CD4-positive, alpha-beta T cell (primary cell): ENCODE measurements at regions of chr1 and their contacts with region 1.

Region 1: GRCh38 chr1:169711469-169712281 is at the start of gene SELL:
- DNase-seq: peak; percentile 53 to 90 (median 70)
- ATAC-seq: peak; percentile 67
- H3K4me3 ChIP-seq: peak within 1 kb of the TSS; percentile 58
- H3K4me3 Mint-ChIP-seq: peak within 1 kb of the TSS; percentile 93
- H3K27ac ChIP-seq: peak within 1 kb of the TSS; percentile 56 to 74
- H3K27ac Mint-ChIP-seq: no peak within 1 kb of the TSS
- H3K4me1 ChIP-seq: peaks cover 6% of the 10 kb centered on the region
- H3K4me1 Mint-ChIP-seq: peaks cover 22% of the 10 kb centered on the region
- H3K27me3 ChIP-seq: no peaks in the 10 kb centered on the region
- H3K27me3 Mint-ChIP-seq: no peaks in the 10 kb centered on the region
- CTCF ChIP-seq: peak; percentile 89
- total RNA-seq, gene SELL: 204 to 216 TPM

Region 2: GRCh38 chr1:169466259-169467230 is 245.1 kb before region 1 on chr1:
- CTCF ChIA-PET with region 1: interaction called, 3 read pairs
- POLR2A ChIA-PET with region 1: interaction called, 3 read pairs
- intact Hi-C with region 1: loop called in 1 of 2 experiments (anchors 10 kb)
- DNase-seq: peak in 5 of 14 experiments; percentile 10 to 53 (median 38)
- ATAC-seq: no peak
- H3K4me3 ChIP-seq: no peak overlapping the region
- H3K4me3 Mint-ChIP-seq: no peak overlapping the region
- H3K27ac ChIP-seq: no peak overlapping the region
- H3K27ac Mint-ChIP-seq: no peak overlapping the region
- H3K4me1 ChIP-seq: no peaks in the 10 kb centered on the region
- H3K4me1 Mint-ChIP-seq: peaks cover 4% of the 10 kb centered on the region
- H3K27me3 ChIP-seq: no peaks in the 10 kb centered on the region
- H3K27me3 Mint-ChIP-seq: no peaks in the 10 kb centered on the region
- CTCF ChIP-seq: peak; percentile 62

Region 3: GRCh38 chr1:169546087-169546995 is 165.3 kb before region 1 on chr1:
- CTCF ChIA-PET with region 1: interaction called, 48 read pairs
- POLR2A ChIA-PET with region 1: interaction called, 5 read pairs
- intact Hi-C with region 1: loop called (anchors 1 to 2 kb)
- DNase-seq: peak; percentile 22 to 86 (median 33)
- ATAC-seq: peak; percentile 89
- H3K4me3 ChIP-seq: no peak overlapping the region
- H3K4me3 Mint-ChIP-seq: no peak overlapping the region
- H3K27ac ChIP-seq: no peak overlapping the region
- H3K27ac Mint-ChIP-seq: no peak overlapping the region
- H3K4me1 ChIP-seq: no peaks in the 10 kb centered on the region
- H3K4me1 Mint-ChIP-seq: peaks cover 4% of the 10 kb centered on the region
- H3K27me3 ChIP-seq: no peaks in the 10 kb centered on the region
- H3K27me3 Mint-ChIP-seq: no peaks in the 10 kb centered on the region
- CTCF ChIP-seq: peak; percentile 82

Region 4: DNA sequence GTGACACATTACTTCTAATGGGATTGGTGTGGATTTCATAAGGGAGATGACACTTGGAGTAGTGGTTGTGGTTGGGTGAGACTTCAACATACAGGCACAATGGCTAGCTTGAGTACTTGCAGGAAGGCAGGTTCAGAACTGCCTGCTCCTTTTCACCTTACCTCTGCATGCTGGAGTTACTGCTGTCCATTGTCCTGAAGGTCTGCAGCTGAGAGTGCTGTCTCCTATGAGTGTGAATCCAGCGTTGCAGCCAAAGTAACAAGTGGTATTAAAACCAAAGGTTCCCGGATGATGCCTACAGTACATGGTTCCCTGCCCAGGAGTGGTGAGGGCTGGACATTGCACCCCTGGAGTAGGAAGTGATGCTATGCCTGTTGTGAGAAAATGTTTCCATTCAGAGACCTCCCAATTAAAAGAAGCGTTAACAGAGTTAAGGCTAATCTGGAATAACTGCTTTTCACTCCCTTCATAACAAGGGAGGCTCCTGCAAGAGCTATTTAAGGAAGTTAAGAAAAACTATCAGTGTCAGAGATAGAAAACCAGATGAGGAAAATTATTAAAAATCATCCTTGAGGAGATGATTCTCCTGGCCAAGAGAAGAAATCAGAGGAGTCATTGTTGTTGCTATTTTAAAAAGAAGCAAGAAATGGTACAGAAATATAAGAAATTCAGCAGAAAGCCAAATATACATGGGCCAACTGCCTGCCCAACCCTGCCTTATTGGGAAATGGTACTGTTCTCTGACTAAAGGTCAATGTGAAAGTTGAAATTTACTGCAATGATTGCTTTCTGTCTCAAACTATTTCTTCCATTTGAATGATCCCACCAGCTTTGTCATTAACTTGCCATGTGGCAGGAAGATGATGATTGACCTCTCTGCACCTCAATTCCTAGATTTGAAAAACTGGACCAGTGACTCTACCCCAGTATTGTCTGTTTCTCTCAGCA is 115.6 kb before region 1 on chr1:
- CTCF ChIA-PET with region 1: interaction called, 78 read pairs
- POLR2A ChIA-PET with region 1: interaction called, 102 read pairs
- intact Hi-C with region 1: loop called (anchors 1 kb)
- DNase-seq: peak in 2 of 14 experiments; percentile 29 to 39
- ATAC-seq: peak; percentile 39
- H3K4me3 ChIP-seq: no peak overlapping the region
- H3K4me3 Mint-ChIP-seq: no peak overlapping the region
- H3K27ac ChIP-seq: no peak overlapping the region
- H3K27ac Mint-ChIP-seq: no peak overlapping the region
- H3K4me1 ChIP-seq: peaks cover 2% of the 10 kb centered on the region
- H3K4me1 Mint-ChIP-seq: peaks cover 5% of the 10 kb centered on the region
- H3K27me3 ChIP-seq: no peaks in the 10 kb centered on the region
- H3K27me3 Mint-ChIP-seq: no peaks in the 10 kb centered on the region
- CTCF ChIP-seq: no peak

Region 5: DNA sequence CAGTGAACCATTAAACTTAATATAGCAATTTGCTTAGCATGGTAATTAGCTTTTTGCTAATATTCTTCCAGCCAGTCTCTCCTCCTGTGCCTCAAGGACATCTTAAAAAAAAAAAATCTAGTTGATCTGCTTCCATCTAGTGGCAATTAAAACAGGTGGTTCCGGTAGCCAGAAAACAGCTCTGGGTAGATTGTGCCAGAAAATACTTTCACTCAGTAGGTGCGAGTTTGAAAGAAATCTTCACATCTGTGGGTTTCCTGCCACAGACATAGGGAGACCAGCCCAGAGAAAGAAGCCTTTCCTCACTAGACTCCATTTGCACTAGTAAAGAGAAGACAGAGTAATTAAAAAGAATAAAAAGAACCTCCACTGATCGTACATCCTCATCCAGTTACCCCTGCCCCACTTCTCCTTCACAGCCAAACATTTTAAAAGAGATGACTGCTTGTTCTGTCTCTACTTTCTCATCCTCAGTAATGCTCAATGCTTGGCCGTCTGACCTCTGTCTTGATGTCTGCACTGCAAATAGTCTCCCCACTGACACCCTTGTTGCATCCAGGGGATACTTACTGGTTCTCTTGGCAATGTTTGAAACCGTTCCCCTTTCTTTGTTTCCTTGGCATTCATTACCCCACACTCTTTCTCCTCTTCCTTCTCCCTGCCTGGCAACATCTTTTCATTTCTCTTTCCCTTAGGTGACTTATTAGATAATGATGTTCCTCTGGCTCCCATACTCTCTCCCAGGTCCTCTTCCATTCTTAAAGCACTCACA is 17.2 kb before region 1 on chr1:
- CTCF ChIA-PET with region 1: interaction called, 34 read pairs
- POLR2A ChIA-PET with region 1: interaction called, 147 read pairs
- intact Hi-C with region 1: loop called (anchors 1 to 2 kb)
- DNase-seq: peak in 10 of 14 experiments; percentile 13 to 90 (median 49)
- ATAC-seq: peak; percentile 59
- H3K4me3 ChIP-seq: peak overlapping the region; percentile 4
- H3K4me3 Mint-ChIP-seq: peak overlapping the region; percentile 68
- H3K27ac ChIP-seq: peak overlapping the region; percentile 55 to 64
- H3K27ac Mint-ChIP-seq: no peak overlapping the region
- H3K4me1 ChIP-seq: peaks cover 83% of the 10 kb centered on the region
- H3K4me1 Mint-ChIP-seq: peaks cover 73% of the 10 kb centered on the region
- H3K27me3 ChIP-seq: no peaks in the 10 kb centered on the region
- H3K27me3 Mint-ChIP-seq: no peaks in the 10 kb centered on the region
- CTCF ChIP-seq: peak; percentile 70

Region 6: GRCh38 chr1:169809370-169810095 is 97.9 kb after region 1 on chr1:
- CTCF ChIA-PET with region 1: interaction called, 8 read pairs
- POLR2A ChIA-PET with region 1: no interaction called
- intact Hi-C with region 1: loop called (anchors 2 to 5 kb)
- DNase-seq: peak in 5 of 14 experiments; percentile 5 to 67 (median 59)
- ATAC-seq: no peak
- H3K4me3 ChIP-seq: no peak overlapping the region
- H3K4me3 Mint-ChIP-seq: no peak overlapping the region
- H3K27ac ChIP-seq: no peak overlapping the region
- H3K27ac Mint-ChIP-seq: no peak overlapping the region
- H3K4me1 ChIP-seq: no peaks in the 10 kb centered on the region
- H3K4me1 Mint-ChIP-seq: no peaks in the 10 kb centered on the region
- H3K27me3 ChIP-seq: no peaks in the 10 kb centered on the region
- H3K27me3 Mint-ChIP-seq: no peaks in the 10 kb centered on the region
- CTCF ChIP-seq: peak; percentile 79

Region 7: DNA sequence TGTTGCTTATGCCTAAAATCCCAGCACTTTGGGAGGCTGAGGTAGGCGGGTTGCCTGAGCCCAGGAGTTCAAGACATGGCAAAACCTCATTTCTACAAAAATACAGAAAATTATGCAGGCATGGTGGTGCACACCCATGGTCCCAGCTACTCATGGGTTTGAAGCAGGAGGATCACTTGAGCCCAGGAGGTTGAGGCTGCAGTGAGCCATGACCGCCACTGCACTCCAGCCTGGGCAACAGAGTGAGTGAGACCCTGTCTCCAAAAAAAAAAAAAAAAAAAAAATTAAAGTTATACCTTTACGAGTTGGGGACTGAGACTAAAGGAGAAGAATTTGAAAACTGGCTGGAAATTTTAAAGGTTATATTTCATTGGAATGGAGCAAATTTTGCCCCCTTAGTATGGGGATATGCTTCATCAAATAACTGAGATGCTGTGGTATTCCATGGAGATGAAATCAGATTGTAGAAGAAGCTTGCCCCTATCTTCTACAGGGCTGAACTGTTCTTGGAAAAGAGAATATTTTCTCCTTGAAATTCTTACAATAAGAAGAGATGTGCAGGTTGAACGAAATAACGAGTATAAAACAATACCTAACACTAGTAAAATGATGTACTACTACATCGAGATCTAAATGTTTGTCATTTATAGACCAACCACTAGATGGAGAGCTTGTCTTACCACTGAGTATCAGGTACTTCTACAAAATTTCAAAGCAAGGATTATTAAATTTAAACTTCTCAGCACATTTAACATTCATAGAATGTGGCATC is 216.9 kb after region 1 on chr1:
- CTCF ChIA-PET with region 1: no interaction called
- POLR2A ChIA-PET with region 1: no interaction called
- intact Hi-C with region 1: no loop called
- DNase-seq: peak in 3 of 14 experiments; percentile 65 to 66 (median 66)
- ATAC-seq: peak; percentile 80
- H3K4me3 ChIP-seq: no peak overlapping the region
- H3K4me3 Mint-ChIP-seq: no peak overlapping the region
- H3K27ac ChIP-seq: no peak overlapping the region
- H3K27ac Mint-ChIP-seq: no peak overlapping the region
- H3K4me1 ChIP-seq: no peaks in the 10 kb centered on the region
- H3K4me1 Mint-ChIP-seq: peaks cover 10% of the 10 kb centered on the region
- H3K27me3 ChIP-seq: no peaks in the 10 kb centered on the region
- H3K27me3 Mint-ChIP-seq: no peaks in the 10 kb centered on the region
- CTCF ChIP-seq: peak; percentile 86